ENCODE measurements at regions of chr16 and their contacts with region 1.

Region 1: GRCh38 chr16:21952793-21953540 is at the start of gene UQCRC2:
- DNase-seq: peak; percentile 89
- ATAC-seq: peak; percentile 98
- total RNA-seq, gene UQCRC2: 169 TPM

Region 2: DNA sequence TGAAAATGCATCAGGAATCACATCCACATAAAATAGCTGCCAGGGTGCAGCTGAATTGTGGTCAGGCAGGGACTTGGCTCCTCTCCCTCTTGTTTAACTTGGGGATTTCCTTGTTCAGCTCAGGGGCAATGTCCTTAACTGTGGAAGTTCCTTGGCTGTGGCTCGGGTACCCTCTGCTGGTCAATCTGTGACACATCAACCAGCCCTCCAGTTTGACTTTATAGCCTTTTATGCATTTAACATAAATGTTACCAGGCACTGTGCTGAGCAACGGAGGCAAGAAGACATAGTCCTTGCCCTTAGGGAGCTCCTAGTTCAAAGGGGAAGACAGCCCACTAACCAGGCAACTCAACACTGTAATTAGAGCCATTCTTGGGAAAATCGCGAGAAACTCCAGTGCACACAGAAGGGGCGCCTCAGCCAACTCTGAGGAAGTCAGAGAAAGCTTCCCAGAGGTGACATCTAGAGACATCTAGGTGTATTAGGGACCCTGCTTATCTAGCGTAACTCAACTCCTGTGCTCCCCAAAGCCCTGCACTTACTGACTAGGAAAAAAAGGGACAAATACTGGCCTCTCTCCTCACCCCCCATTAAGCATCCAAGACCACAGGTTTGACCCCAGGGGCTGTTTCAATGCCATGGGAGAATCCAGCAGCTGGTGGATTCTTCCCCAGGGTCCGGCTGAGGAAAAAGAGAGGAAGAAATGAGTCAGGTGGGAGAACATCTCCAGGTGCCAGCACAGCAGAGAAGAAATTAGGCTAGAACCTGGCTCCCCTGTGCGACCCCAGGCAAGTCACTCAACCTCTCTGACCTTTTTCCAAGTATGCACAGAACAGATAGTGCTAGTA is 235.9 kb after region 1 on chr16:
- intact Hi-C with region 1: loop called (anchors 1 kb)
- DNase-seq: peak; percentile 77
- ATAC-seq: no peak

Measured in sciatic nerve (tissue), 2 donors.